ENCODE measurements at regions of chr1 and their contacts with region 1.

Region 1: GRCh38 chr1:150578965-150579798 is at the start of gene MCL1:
- DNase-seq: peak; percentile 87 to 97 (median 91)
- ATAC-seq: peak; percentile 92
- H3K4me3 ChIP-seq: peak within 1 kb of the TSS; percentile 98
- H3K27ac ChIP-seq: peak within 1 kb of the TSS; percentile 87
- H3K4me1 ChIP-seq: peaks cover 10 to 19% of the 10 kb centered on the region in 2 experiments; a peak in 4 of 5 replicates
- H3K27me3 ChIP-seq: no peaks in the 10 kb centered on the region
- CTCF ChIP-seq: peak in 2 of 3 experiments; percentile 17 to 31; a peak in 3 of 6 replicates
- EP300 ChIP-seq: peak; percentile 69; the same call in 1 of the 2 replicates
- POLR2A ChIP-seq: peak; percentile 99
- RAD21 ChIP-seq: no peak
- polyA plus RNA-seq, gene MCL1: 27.1 to 31.0 TPM

Region 2: DNA sequence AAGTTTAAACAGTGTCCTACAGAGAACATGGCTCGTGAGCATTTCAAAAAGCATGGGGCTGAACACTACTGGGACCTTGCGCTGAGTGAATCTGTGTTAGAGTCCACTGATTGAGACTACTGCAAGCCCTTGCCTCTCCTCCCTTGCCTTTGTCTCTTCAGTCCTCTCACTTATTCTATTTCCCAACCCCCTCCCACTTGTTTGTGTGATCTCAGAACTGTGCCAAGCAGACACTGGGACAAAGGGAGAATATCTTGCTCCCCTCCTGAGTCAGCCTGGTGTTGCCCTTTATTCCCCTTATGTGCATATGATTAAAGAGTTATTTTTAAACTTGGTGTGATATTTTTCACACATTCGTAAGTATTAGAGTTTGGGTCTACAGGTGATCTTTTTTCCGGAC is 226.3 kb before region 1 on chr1:
- CTCF ChIA-PET with region 1: no interaction called
- POLR2A ChIA-PET with region 1: no interaction called
- in situ Hi-C with region 1: no loop called
- intact Hi-C with region 1: no loop called
- DNase-seq: no peak
- ATAC-seq: no peak
- H3K4me3 ChIP-seq: no peak overlapping the region
- H3K27ac ChIP-seq: no peak overlapping the region
- H3K4me1 ChIP-seq: no peaks in the 10 kb centered on the region
- H3K27me3 ChIP-seq: no peaks in the 10 kb centered on the region
- CTCF ChIP-seq: no peak
- EP300 ChIP-seq: no peak
- POLR2A ChIP-seq: no peak
- RAD21 ChIP-seq: no peak

Region 3: DNA sequence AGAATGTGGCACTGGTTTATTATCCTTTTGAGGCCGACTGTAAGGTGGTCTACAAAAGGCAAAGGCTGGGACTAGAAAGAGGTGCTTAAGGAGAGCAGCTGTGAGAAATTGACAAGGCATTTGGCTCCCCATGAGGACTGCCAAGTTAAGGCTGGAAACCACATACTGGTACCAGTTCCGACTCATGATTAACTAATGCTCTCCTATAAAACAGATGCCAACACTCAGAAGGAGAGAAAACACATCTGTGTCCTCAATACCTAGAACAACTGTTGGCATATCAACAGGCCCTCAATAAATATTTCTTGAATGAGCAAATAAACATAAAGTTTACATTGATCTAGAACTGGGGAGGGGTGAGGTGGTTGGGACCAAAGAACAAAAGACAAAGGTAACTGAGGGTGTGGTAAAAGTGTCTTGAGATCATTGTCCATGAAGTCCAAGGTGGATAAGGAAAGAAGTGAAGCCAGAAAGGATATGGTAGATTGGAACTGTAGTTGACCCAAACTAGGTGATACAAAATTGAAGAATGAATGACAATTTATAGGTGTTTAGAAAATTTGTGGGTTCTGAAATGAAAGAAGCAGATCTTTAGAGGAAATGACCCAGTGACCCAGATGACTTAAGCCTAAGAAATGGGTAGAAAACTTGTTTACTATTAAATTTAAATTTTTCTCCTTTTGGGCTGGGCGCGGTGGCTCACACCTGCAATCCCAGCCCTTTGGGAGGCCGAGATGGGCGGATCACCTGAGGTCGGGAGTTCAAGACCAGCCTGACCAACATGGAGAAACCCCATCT is 17.1 kb after region 1 on chr1:
- CTCF ChIA-PET with region 1: no interaction called
- POLR2A ChIA-PET with region 1: interaction called, 22 read pairs
- in situ Hi-C with region 1: no loop called
- intact Hi-C with region 1: no loop called
- DNase-seq: no peak
- ATAC-seq: no peak
- H3K4me3 ChIP-seq: no peak overlapping the region
- H3K27ac ChIP-seq: no peak overlapping the region
- H3K4me1 ChIP-seq: no peaks in the 10 kb centered on the region; a peak in 1 of 5 replicates
- H3K27me3 ChIP-seq: no peaks in the 10 kb centered on the region
- CTCF ChIP-seq: no peak
- EP300 ChIP-seq: no peak
- POLR2A ChIP-seq: no peak
- RAD21 ChIP-seq: no peak

Region 4: DNA sequence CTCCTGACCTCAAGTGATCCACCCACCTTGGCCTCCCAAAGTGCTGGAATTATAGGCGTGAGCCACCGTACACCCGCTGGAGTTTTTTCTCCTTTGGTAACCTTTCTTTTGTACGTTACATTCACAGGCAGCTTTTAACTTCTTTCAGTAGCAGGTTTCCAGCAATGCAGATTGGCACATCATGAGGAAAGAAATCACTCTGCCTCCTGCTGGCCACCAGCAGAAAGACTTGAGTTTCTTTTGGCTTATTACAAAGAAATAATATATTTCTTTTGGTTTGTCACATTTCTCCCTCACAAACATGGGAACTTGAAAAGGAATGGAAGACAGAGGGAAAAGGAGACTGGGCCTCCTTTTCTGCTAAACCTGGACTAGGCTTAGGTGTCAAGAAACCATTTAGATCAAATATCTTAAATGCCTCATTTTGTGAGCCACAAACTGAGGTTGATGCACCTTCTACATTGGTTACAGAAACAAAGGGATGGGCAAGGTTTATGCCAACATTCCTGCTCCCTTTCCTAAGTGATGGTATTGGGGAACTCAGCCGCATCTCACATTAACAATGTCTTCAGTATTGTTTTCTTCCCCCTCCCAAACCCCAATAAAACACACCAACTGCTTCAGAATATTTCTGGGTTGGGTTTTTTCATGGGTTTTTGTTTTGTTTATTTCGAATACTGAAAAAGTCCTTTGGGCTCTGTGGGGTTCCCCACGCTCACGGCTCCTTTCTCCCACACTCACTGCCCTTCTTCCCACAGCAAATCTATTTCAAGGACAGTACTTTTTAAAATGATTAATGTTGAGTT is 42.5 kb after region 1 on chr1:
- CTCF ChIA-PET with region 1: interaction called, 4 read pairs
- POLR2A ChIA-PET with region 1: interaction called, 18 read pairs
- in situ Hi-C with region 1: no loop called
- intact Hi-C with region 1: loop called (anchors 2 kb)
- DNase-seq: peak in 3 of 4 experiments; percentile 26 to 54 (median 31)
- ATAC-seq: no peak
- H3K4me3 ChIP-seq: no peak overlapping the region
- H3K27ac ChIP-seq: peak overlapping the region; percentile 59
- H3K4me1 ChIP-seq: peaks cover 31 to 44% of the 10 kb centered on the region in 2 experiments
- H3K27me3 ChIP-seq: no peaks in the 10 kb centered on the region
- CTCF ChIP-seq: peak; percentile 52 to 74 (median 71)
- EP300 ChIP-seq: no peak
- POLR2A ChIP-seq: 0 out of 2 replicates have a peak, but pooled peaks have one; percentile 28
- RAD21 ChIP-seq: peak; percentile 41 to 58

Region 5: GRCh38 chr1:150696590-150697524 is 117.7 kb after region 1 on chr1 and contains the start of gene GOLPH3L:
- CTCF ChIA-PET with region 1: no interaction called
- POLR2A ChIA-PET with region 1: interaction called, 10 read pairs
- in situ Hi-C with region 1: no loop called
- intact Hi-C with region 1: no loop called
- DNase-seq: peak; percentile 95 to 99 (median 97)
- ATAC-seq: peak; percentile 99
- H3K4me3 ChIP-seq: peak within 1 kb of the TSS; percentile 55
- H3K27ac ChIP-seq: peak within 1 kb of the TSS; percentile 65
- H3K4me1 ChIP-seq: no peaks in the 10 kb centered on the region; a peak in 1 of 5 replicates
- H3K27me3 ChIP-seq: no peaks in the 10 kb centered on the region
- CTCF ChIP-seq: peak in 1 of 3 experiments; percentile 1; a peak in 1 of 6 replicates
- EP300 ChIP-seq: no peak
- POLR2A ChIP-seq: peak; percentile 76
- RAD21 ChIP-seq: no peak
- polyA plus RNA-seq, gene GOLPH3L: 16.8 to 21.9 TPM

Measured in K562 (cell line).